Mammary epithelial cell (primary cell): ENCODE measurements at regions of chr21 and their contacts with region 1.

Region 1: GRCh38 chr21:36630485-36631206 is 68.3 kb upstream of the SIM2 start:
- DNase-seq: peak; percentile 12
- H3K4me3 ChIP-seq: no peak overlapping the region
- H3K27ac ChIP-seq: no peak overlapping the region
- H3K4me1 ChIP-seq: peaks cover 3% of the 10 kb centered on the region
- H3K27me3 ChIP-seq: peaks cover 2% of the 10 kb centered on the region
- CTCF ChIP-seq: peak; percentile 67 to 74

Region 2: DNA sequence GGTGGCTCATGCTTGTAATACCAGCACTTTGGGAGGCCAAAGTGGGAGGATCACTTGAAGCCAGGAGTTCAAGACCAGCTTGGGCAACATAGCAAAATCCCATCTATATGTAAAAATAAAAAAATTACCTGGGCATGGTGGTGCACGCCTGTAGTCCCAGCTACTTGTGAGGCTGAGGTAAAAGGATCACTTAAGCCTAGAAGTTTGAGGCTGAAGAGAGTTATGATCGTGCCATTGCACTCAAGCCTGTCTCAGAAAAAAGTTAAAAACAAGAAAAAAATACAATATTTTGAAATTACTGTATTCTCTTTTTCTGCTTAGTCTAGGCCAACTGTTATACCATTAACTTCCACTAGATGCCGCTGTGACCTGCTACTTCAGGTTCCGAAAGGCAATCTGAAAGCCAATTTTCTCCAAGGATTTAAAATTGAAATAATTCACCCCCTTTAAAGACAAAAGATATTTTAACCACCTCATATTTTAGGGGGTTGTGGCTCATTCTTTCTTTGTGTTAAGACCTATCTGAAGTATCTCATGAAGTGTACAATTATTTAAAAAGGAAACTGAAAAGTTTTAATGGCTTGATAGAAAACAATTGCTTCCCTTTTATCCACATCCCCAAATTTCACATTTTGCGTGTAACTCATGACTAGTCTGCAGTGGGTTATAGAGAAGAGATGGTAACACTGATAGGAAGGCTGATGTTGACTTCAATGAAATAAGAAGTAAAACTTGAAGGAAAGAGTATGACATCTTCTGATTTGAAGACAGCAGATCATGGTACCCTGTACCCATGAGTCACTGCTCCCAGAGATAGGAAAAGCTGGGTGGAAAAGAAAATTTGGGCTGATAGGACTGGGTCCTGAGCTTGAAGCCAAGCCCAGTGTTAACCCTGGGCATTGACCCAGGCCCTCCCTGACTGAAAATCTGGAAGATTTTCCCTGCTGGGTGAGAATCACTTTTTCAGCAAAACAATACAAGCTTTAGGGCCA is 126.3 kb before region 1 on chr21:
- CTCF ChIA-PET with region 1: no interaction called
- dilution Hi-C with region 1: no loop called
- in situ Hi-C with region 1: no loop called
- intact Hi-C with region 1: loop called (anchors 1 kb)
- DNase-seq: peak; percentile 11
- H3K4me3 ChIP-seq: no peak overlapping the region
- H3K27ac ChIP-seq: no peak overlapping the region
- H3K4me1 ChIP-seq: peaks cover 9% of the 10 kb centered on the region
- H3K27me3 ChIP-seq: no peaks in the 10 kb centered on the region
- CTCF ChIP-seq: peak; percentile 78 to 86

Region 3: GRCh38 chr21:36706951-36707762 is 76.5 kb after region 1 on chr21:
- CTCF ChIA-PET with region 1: no interaction called
- dilution Hi-C with region 1: no loop called
- in situ Hi-C with region 1: no loop called
- intact Hi-C with region 1: loop called (anchors 5 kb)
- DNase-seq: no peak
- H3K4me3 ChIP-seq: no peak overlapping the region
- H3K27ac ChIP-seq: no peak overlapping the region
- H3K4me1 ChIP-seq: peaks cover 20% of the 10 kb centered on the region
- H3K27me3 ChIP-seq: peaks cover 90% of the 10 kb centered on the region
- CTCF ChIP-seq: peak in 1 of 2 donors; percentile 28

Region 4: DNA sequence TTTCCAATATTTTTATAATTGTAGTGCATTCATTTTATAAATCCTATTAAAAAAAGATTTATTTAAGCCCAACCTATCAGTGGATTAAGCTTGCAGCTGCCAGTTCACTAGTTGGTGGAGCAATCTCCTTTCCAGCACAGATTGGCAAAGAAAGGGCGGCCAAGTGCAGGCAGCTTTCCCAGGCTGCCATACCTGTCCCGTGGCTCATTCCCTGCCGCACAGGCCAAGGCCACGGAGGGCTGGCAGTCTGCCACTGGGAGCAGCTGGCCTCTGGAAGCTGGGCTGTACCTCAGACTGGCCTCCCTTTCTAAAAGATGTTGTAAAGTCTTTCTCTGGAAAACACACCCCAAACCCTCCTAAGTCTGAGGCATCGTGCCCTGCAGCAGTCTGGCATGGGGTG is 142.5 kb after region 1 on chr21:
- CTCF ChIA-PET with region 1: interaction called, 3 read pairs
- dilution Hi-C with region 1: loop called (anchors 10 kb)
- in situ Hi-C with region 1: no loop called
- intact Hi-C with region 1: no loop called
- DNase-seq: peak; percentile 84
- H3K4me3 ChIP-seq: no peak overlapping the region
- H3K27ac ChIP-seq: no peak overlapping the region
- H3K4me1 ChIP-seq: peaks cover 5% of the 10 kb centered on the region
- H3K27me3 ChIP-seq: no peaks in the 10 kb centered on the region
- CTCF ChIP-seq: no peak

Region 5: DNA sequence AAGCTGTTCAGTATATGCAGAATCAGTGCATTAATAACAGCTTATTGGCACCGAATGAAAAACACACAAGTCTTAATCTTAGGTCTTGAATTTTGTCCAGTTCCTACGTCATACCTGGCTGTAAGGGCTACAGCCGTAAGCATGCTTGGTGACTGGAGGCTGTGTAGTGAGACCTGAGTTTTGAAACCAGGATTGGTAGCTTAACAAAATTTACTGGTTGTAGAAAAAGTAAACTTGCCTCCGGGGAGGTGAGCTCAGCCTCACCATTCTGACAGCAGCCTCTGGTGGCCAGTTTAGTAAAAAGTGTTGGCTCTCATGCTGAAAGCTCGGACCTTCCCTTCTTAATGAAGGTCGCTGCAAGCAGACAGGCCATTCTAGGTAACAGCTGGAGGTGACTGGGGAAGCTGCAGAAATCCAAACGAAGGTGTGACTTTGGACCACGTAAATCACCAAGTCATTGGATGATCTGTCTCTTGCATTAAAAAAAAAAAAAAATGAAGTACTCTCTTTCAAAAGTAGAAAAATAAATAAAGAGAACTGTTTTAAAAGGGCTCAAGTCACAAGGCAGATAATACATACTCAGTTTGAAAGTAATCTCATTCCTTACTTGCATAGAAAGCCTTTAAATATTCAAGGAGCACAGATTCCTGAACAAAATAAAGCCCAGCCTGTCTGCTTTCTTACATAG is 287.0 kb after region 1 on chr21:
- CTCF ChIA-PET with region 1: interaction called, 3 read pairs
- dilution Hi-C with region 1: no loop called
- in situ Hi-C with region 1: no loop called
- intact Hi-C with region 1: loop called (anchors 1 kb)
- DNase-seq: no peak
- H3K4me3 ChIP-seq: no peak overlapping the region
- H3K27ac ChIP-seq: no peak overlapping the region
- H3K4me1 ChIP-seq: no peaks in the 10 kb centered on the region
- H3K27me3 ChIP-seq: no peaks in the 10 kb centered on the region
- CTCF ChIP-seq: peak; percentile 41 to 71

Region 6: GRCh38 chr21:37009740-37010341 is 379.2 kb after region 1 on chr21:
- CTCF ChIA-PET with region 1: no interaction called
- dilution Hi-C with region 1: no loop called
- in situ Hi-C with region 1: no loop called
- intact Hi-C with region 1: loop called (anchors 5 kb)
- DNase-seq: peak; percentile 71
- H3K4me3 ChIP-seq: peak overlapping the region; percentile 32 to 41 (median 35)
- H3K27ac ChIP-seq: no peak overlapping the region
- H3K4me1 ChIP-seq: peaks cover 4% of the 10 kb centered on the region
- H3K27me3 ChIP-seq: no peaks in the 10 kb centered on the region
- CTCF ChIP-seq: peak; percentile 80 to 89